ENCODE measurements at regions of chr15 and their contacts with region 1.

Region 1: DNA sequence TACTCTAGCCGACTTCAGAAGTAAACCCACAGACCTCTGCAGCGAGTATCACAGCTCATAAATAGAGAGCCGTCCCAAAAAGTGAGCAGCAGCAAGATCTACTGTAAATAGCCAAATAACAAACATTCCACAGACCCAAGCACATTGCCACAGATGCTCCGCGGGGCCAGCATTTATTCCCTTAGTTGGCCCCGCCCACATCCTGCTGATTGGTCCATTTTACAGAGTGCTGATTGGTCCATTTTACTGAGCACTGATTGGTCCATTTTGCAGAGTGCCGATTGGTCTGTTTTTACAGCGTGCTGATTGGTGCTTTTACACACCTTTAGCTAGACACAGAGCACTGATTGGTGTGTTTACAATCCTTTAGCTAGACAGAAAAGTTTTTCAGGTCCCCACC is 17.3 kb upstream of the GABRB3 start:
- DNase-seq: no peak
- ATAC-seq: no peak
- H3K4me3 ChIP-seq: no peak overlapping the region
- H3K27ac ChIP-seq: no peak overlapping the region
- H3K4me1 ChIP-seq: no peaks in the 10 kb centered on the region
- H3K27me3 ChIP-seq: peaks cover 0 to 5% (median 0%) of the 10 kb centered on the region in 7 donors
- CTCF ChIP-seq: no peak

Region 2: DNA sequence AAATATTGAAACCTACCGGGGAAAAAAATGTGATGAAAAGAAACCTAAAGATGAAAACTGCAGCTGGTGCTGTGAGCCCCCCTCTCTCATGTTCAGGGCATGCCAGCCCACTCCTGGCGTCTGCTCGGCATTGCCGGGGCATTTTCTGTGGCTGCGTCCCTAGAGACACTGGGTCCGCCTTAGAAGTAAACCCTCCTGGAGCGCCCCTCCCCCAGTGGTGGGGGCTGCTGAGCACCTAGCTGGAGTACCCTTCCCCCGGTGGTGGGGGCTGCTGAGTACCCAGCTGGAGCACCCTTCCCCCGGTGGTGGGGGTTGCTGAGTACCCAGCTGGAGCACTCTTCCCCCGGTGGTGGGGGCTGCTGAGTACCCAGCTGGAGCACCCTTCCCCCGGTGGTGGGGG is 52.3 kb after region 1 on chr15:
- intact Hi-C with region 1: loop called in 1 of 10 experiments (anchors 5 kb)
- DNase-seq: no peak
- ATAC-seq: no peak
- H3K4me3 ChIP-seq: no peak overlapping the region
- H3K27ac ChIP-seq: no peak overlapping the region
- H3K4me1 ChIP-seq: no peaks in the 10 kb centered on the region
- H3K27me3 ChIP-seq: peaks cover 0 to 36% (median 10%) of the 10 kb centered on the region in 7 donors
- CTCF ChIP-seq: no peak

Region 3: GRCh38 chr15:26928051-26928450 is 137.9 kb after region 1 on chr15:
- intact Hi-C with region 1: no loop called
- DNase-seq: no peak
- ATAC-seq: no peak
- H3K4me3 ChIP-seq: no peak overlapping the region
- H3K27ac ChIP-seq: no peak overlapping the region
- H3K4me1 ChIP-seq: no peaks in the 10 kb centered on the region
- H3K27me3 ChIP-seq: peaks cover 0 to 5% (median 0%) of the 10 kb centered on the region in 7 donors
- CTCF ChIP-seq: no peak